A673 (cell line): ENCODE measurements at regions of chr12 and their contacts with region 1.

Region 1: DNA sequence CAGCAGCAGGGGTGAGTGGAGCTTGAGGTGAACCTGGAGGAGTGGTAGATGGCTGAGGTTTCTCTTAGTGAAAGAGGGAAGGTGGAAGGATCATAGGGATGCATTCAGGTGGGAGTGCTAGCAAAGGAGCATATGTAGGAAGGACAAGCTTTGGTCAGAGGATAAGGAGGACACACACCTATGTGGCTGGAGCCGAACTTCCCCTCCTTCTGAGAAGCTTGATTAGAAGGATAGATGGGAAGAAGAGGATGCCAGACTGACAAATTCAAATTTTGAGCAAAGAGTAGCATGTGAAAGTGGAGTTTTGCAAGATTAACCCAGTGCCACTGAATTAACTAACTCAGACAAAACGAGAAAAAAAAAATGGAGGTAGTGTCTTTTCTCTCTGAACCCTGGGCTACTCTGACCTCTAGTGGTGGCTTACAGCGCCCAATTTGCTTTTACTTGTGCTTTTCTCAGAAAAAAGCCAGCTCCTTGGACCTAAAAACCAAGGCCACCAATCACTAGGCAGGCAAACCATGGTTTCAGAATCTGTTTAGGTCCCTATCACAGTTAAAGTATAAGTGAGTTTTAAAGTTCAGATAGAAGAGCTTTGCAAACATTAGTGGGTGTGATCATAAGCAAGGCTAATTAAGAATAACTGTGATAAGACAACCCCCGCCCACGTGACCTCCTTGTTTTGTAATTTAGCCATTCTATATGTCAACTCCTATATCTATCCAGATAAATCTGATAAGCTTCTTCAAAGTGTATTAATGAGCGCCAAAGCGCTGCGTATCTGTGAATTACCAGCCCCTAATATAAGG is 15.5 kb downstream of the EMP1 start:
- DNase-seq: peak; percentile 89
- H3K4me3 ChIP-seq: no peak overlapping the region
- H3K27ac ChIP-seq: peak overlapping the region; percentile 10
- H3K4me1 ChIP-seq: peaks cover 35% of the 10 kb centered on the region
- H3K27me3 ChIP-seq: no peaks in the 10 kb centered on the region
- CTCF ChIP-seq: peak; percentile 82

Region 2: DNA sequence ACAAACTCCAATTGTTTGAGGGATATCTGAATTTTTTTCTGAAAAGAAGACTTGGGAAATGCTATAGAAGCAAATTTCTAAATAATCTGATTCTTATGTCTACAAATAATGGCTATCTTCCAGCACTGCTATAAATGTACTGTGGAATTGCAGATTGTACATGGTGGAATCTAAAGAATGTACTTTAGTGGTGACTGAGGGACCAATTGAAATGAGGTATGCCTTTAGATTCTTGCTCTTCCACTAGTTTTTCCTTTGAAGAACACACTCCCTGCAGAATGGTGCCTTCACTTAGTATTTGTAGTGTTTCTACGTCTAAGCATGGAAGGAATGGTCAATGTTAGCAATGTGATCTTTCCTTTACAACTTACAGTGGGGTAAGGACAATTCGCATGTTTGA is 1890.1 kb before region 1 on chr12:
- CTCF ChIA-PET with region 1: no interaction called
- POLR2A ChIA-PET with region 1: no interaction called
- intact Hi-C with region 1: no loop called
- DNase-seq: no peak
- H3K4me3 ChIP-seq: no peak overlapping the region
- H3K27ac ChIP-seq: no peak overlapping the region
- H3K4me1 ChIP-seq: no peaks in the 10 kb centered on the region
- H3K27me3 ChIP-seq: no peaks in the 10 kb centered on the region
- CTCF ChIP-seq: no peak

Region 3: DNA sequence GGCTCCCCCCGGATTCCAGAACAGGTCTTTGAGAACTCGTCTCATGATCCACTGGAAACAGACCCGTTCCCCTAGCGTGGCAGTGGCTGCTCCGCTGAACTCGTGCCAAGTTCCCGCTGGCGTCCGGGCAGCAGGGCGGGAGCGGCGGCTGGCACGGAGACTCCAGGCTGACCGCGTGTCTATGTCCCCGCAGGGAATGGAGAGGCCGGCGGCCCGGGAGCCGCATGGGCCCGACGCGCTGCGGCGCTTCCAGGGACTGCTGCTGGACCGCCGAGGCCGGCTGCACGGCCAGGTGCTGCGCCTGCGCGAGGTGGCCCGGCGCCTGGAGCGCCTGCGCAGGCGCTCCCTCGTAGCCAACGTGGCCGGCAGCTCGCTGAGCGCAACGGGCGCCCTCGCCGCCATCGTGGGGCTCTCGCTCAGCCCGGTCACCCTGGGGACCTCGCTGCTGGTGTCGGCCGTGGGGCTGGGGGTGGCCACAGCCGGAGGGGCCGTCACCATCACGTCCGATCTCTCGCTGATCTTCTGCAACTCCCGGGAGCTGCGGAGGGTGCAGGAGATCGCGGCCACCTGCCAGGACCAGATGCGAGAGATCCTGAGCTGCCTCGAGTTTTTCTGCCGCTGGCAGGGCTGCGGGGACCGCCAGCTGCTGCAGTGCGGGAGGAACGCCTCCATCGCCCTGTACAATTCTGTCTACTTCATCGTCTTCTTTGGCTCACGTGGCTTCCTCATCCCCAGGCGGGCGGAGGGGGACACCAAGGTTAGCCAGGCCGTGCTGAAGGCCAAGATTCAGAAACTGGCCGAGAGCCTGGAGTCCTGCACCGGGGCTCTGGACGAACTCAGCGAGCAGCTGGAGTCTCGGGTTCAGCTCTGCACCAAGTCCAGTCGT is 425.1 kb before region 1 on chr12:
- CTCF ChIA-PET with region 1: no interaction called
- POLR2A ChIA-PET with region 1: no interaction called
- intact Hi-C with region 1: loop called (anchors 5 kb)
- DNase-seq: peak; percentile 88
- H3K4me3 ChIP-seq: peak overlapping the region; percentile 54
- H3K27ac ChIP-seq: peak overlapping the region; percentile 75
- H3K4me1 ChIP-seq: peaks cover 38% of the 10 kb centered on the region
- H3K27me3 ChIP-seq: no peaks in the 10 kb centered on the region
- CTCF ChIP-seq: no peak

Region 4: DNA sequence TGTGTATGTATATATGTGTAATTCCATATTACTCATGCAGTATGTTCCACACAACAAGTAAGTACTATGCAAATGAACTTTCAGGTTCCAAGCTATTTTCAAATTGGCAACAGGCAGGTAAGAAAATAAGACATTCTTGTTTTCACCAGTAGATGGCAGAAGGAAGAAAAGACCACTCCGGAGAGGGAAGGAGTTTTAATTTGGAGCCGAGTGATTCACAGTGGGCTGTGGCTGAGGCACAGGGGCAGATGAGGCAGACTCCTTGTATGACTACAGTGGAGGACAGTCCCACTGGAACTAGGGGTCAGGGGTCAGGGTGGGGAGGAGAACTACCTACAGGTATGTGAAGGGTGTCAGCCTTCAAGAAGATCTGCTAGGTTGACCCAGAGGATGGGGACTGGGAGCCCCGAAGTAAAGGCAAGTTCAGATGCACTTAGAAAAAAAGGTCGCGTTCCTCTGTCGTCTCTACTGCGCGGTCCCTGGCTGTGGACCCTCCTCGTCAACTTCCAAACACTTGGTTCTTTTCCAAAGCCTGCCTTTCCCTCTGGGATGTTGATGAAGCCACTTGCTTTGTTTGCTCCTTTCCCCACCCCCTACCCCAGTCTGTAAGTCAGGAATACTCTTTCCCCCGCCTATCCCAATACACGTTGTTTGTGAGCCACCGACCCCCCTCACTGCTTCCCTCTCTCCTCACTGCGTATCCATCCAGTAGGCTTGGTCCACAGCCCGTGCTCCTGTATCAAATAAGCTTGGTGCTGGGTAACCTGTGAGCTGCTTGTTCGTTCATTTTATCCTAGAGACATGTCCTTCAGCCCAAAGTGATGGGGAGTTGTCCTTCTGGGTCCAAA is 374.8 kb before region 1 on chr12:
- CTCF ChIA-PET with region 1: interaction called, 8 read pairs
- POLR2A ChIA-PET with region 1: no interaction called
- intact Hi-C with region 1: loop called (anchors 5 kb)
- DNase-seq: peak; percentile 70
- H3K4me3 ChIP-seq: no peak overlapping the region
- H3K27ac ChIP-seq: no peak overlapping the region
- H3K4me1 ChIP-seq: no peaks in the 10 kb centered on the region
- H3K27me3 ChIP-seq: no peaks in the 10 kb centered on the region
- CTCF ChIP-seq: peak; percentile 72

Region 5: GRCh38 chr12:12916135-12916944 is 295.7 kb before region 1 on chr12:
- CTCF ChIA-PET with region 1: interaction called, 17 read pairs
- POLR2A ChIA-PET with region 1: no interaction called
- intact Hi-C with region 1: loop called (anchors 1 kb)
- DNase-seq: peak; percentile 90
- H3K4me3 ChIP-seq: no peak overlapping the region
- H3K27ac ChIP-seq: no peak overlapping the region
- H3K4me1 ChIP-seq: peaks cover 7% of the 10 kb centered on the region
- H3K27me3 ChIP-seq: no peaks in the 10 kb centered on the region
- CTCF ChIP-seq: peak; percentile 97

Region 6: GRCh38 chr12:12983420-12984035 is 228.5 kb before region 1 on chr12:
- CTCF ChIA-PET with region 1: interaction called, 12 read pairs
- POLR2A ChIA-PET with region 1: no interaction called
- intact Hi-C with region 1: no loop called
- DNase-seq: peak; percentile 65
- H3K4me3 ChIP-seq: no peak overlapping the region
- H3K27ac ChIP-seq: no peak overlapping the region
- H3K4me1 ChIP-seq: peaks cover 11% of the 10 kb centered on the region
- H3K27me3 ChIP-seq: no peaks in the 10 kb centered on the region
- CTCF ChIP-seq: peak; percentile 71

Region 7: DNA sequence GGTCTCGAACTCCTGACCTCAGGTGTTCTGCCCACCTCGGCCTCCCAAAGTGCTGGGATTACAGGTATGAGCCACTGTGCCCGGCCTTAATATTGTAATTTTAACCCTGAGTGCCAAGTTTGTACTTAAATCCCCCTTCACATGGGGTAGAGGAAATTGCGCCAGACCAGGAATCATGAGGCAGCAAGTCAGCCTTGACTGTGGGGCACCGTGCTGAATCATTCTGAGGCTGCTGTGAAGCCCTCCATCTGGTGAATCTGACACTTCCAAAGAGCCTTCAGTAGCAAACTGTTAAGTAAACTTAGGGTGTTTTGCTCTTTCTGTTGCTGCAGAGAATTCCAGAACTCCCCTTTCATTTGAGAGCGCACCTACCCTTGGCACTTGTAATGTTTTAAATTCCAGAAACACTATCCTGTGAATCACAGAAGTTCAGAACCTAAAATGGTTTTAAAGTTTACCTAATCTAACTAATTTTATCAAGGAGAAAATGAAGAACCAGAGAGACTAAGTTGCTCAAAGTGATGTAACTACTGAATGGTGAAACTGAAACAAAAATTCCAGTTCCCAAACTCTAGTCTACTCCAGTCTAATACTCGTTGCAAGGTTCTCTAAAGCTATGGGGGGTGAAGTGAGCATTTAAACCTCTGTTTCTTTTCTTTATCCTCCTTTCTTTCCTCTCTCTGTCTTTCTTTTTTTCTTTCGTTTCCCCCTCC is 219.5 kb before region 1 on chr12:
- CTCF ChIA-PET with region 1: no interaction called
- POLR2A ChIA-PET with region 1: no interaction called
- intact Hi-C with region 1: loop called (anchors 2 kb)
- DNase-seq: peak; percentile 80
- H3K4me3 ChIP-seq: peak overlapping the region; percentile 4
- H3K27ac ChIP-seq: peak overlapping the region; percentile 74
- H3K4me1 ChIP-seq: peaks cover 21% of the 10 kb centered on the region
- H3K27me3 ChIP-seq: no peaks in the 10 kb centered on the region
- CTCF ChIP-seq: no peak